Activated T-helper 1 cell treated with anti-CD3 and anti-CD28 coated beads, Interleukin-12 subunit alpha, Interleukin-12 subunit beta, Interleukin-2, Interleukin-4 antibody, amounts not matched to agents 30 ng/mL and 10 ng/mL and 1 ng/mL, durations not matched to agents 14 hours and 24 hours and 36 hours (primary cell): ENCODE measurements at regions of chr7 and their contacts with region 1.

Region 1: DNA sequence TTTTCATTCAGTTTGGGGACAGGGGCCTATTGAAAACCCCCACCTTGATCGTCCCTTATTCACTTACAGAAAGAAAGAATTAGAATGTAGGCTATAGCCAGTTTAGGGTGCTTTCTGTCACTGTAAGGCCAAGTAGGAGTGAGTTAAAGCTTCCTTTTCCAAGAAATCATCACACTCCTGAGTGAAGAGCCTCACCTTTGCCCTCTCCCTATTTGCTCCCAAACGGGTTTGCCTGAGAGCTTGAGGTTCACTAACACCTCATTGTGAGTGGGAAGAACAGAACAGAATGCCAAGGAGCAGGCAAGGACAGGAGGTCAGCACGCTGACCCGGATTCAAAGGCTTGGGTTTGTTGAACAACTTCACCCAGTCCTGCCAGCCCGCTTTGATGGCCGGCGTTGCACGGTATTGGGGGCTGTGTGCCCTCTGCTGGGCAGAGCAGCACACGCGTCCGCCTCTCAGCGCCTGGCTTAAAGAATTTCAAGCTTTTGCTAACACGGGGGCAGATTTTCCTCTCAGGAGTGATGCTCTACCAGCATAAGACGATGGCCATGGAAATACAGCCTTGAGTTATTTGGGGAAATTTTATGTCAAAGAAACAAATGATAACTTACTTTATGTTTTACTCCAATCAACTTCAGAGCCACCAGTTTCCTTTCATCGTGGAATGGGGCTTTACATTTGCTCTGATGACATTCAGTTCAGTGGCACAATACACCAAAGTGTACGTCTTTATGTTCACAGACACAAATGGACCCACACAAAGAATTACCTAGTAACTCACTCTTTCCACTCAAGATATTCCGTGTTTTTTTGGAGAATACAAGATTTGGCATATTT is 470.0 kb downstream of the SUGCT start:
- DNase-seq: no peak
- H3K4me3 Mint-ChIP-seq: no peak overlapping the region
- H3K27ac Mint-ChIP-seq: no peak overlapping the region
- H3K4me1 Mint-ChIP-seq: no peaks in the 10 kb centered on the region
- H3K27me3 Mint-ChIP-seq: peaks cover 2% of the 10 kb centered on the region

Region 2: GRCh38 chr7:39172137-39172536 is 1432.7 kb before region 1 on chr7:
- intact Hi-C with region 1: loop called (anchors 5 kb)
- DNase-seq: no peak
- H3K4me3 Mint-ChIP-seq: no peak overlapping the region
- H3K27ac Mint-ChIP-seq: no peak overlapping the region
- H3K4me1 Mint-ChIP-seq: no peaks in the 10 kb centered on the region
- H3K27me3 Mint-ChIP-seq: no peaks in the 10 kb centered on the region

Region 3: GRCh38 chr7:40232242-40232893 is 372.5 kb before region 1 on chr7:
- intact Hi-C with region 1: loop called (anchors 10 kb)
- DNase-seq: no peak
- H3K4me3 Mint-ChIP-seq: no peak overlapping the region
- H3K27ac Mint-ChIP-seq: no peak overlapping the region
- H3K4me1 Mint-ChIP-seq: no peaks in the 10 kb centered on the region
- H3K27me3 Mint-ChIP-seq: no peaks in the 10 kb centered on the region

Region 4: GRCh38 chr7:40311307-40311706 is 293.5 kb before region 1 on chr7:
- intact Hi-C with region 1: no loop called
- DNase-seq: no peak
- H3K4me3 Mint-ChIP-seq: no peak overlapping the region
- H3K27ac Mint-ChIP-seq: no peak overlapping the region
- H3K4me1 Mint-ChIP-seq: peaks cover 8% of the 10 kb centered on the region
- H3K27me3 Mint-ChIP-seq: peaks cover 6% of the 10 kb centered on the region

Region 5: DNA sequence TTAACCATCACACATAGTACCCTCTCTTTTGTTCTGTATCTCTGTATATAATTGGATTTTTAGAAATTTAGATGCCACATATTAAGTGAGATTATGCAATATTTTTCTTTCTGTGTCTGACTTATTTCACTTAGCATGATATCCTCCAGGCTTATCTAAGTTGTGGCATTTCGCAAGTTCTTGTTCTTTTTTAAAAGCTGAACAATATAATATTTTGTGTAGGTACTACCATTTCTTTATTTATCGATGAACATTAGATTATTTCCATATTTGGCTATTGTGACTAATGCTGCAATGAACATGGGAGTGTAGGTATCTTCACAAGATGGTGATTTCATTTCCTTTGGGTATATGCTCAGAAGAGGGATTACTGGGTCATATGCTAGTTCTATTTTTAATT is 175.0 kb before region 1 on chr7:
- intact Hi-C with region 1: no loop called
- DNase-seq: no peak
- H3K4me3 Mint-ChIP-seq: no peak overlapping the region
- H3K27ac Mint-ChIP-seq: no peak overlapping the region
- H3K4me1 Mint-ChIP-seq: no peaks in the 10 kb centered on the region
- H3K27me3 Mint-ChIP-seq: no peaks in the 10 kb centered on the region

Region 6: DNA sequence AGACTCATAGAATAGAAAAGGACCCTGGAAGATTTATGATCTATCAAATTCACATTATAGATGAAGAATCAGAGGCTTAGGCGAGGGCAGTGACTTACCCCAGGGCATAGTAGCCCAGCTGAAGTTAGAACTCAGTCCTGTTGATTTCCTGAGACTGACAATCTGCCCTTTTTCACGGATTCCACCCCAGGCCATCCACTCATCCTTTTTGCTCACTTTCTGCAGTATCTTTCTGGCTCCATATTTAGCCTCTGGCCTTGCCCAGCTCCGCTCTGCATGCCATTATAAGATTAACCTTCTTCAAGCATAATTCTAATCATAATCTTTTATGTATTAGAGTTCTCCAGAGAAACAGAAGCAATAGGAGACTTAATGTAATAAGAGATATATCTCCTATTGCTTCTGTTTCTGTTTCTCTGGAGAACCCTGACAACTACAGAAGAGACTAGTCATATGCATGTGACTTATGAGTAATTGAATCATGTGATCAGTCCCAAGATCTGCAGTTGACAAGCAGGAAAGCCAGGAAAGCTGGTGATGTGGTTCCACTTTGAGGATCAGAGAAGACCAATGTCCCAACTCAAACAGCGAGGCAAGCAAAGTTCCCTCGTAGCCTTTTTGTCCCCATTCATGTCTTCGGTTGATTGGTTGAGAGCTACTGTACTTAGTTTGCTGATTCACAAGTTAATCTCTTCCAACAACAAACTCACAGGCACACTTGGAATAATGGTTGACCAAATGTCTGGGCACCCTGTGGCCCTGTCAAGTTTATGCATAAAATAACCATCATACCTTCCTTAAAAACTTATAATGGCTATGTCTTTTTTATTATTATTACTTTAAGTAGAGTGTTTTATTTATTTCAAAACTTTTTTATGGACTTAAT is 58.0 kb before region 1 on chr7:
- intact Hi-C with region 1: no loop called
- DNase-seq: no peak
- H3K4me3 Mint-ChIP-seq: no peak overlapping the region
- H3K27ac Mint-ChIP-seq: no peak overlapping the region
- H3K4me1 Mint-ChIP-seq: peaks cover 1% of the 10 kb centered on the region
- H3K27me3 Mint-ChIP-seq: no peaks in the 10 kb centered on the region